ENCODE measurements at regions of chr7 and their contacts with region 1.

Region 1: GRCh38 chr7:80918909-80919662 is at the start of gene SEMA3C:
- DNase-seq: peak; percentile 90
- ATAC-seq: peak; percentile 87
- H3K4me3 ChIP-seq: peak within 1 kb of the TSS; percentile 95 to 99
- H3K27ac ChIP-seq: peak within 1 kb of the TSS; percentile 100
- H3K4me1 ChIP-seq: peaks cover 59% of the 10 kb centered on the region
- H3K27me3 ChIP-seq: no peaks in the 10 kb centered on the region
- CTCF ChIP-seq: peak; percentile 22; the same call in 1 of the 2 replicates
- total RNA-seq, gene SEMA3C: 232 TPM

Region 2: DNA sequence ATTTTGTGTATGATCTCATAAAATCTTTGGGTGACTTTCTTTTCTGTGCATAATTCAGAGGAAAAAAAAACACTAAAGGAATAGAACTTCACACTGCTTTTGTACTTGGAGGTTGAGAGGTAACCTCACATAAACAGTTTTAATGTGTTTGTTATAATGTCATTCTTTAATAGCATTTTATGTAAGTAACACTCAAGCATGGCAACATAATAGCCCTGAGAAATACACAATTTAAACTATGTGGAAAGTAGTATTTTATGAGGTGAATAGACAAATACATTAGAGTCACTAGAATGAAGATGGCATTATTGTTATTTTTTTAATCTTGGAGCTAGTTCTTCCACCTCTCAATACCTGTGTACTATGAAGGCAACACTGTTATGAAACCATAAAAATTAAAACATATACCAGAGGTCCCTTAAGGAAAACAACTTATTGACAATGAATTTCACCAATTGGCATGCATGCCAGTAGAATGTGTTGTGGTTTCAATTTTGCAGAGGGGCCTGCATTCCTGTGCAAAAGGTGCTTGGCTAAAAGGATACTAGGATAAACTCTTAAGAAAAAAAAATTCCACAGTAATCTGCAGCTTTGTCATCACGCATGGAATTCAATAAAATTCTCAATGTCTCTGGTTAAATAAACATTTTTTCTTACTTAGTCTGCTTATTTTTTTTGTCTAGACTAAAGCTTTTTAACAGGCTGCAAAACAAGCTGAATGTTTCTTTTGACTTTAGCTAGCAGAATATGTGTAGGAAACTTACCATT is 178.1 kb before region 1 on chr7:
- CTCF ChIA-PET with region 1: interaction called, 12 read pairs
- POLR2A ChIA-PET with region 1: no interaction called
- in situ Hi-C with region 1: no loop called
- intact Hi-C with region 1: no loop called
- DNase-seq: no peak
- ATAC-seq: peak; percentile 69
- H3K4me3 ChIP-seq: no peak overlapping the region
- H3K27ac ChIP-seq: peak overlapping the region; percentile 80
- H3K4me1 ChIP-seq: peaks cover 29% of the 10 kb centered on the region; the same call in 1 of the 2 replicates
- H3K27me3 ChIP-seq: no peaks in the 10 kb centered on the region
- CTCF ChIP-seq: no peak

Region 3: GRCh38 chr7:81173766-81174281 is 254.7 kb after region 1 on chr7:
- CTCF ChIA-PET with region 1: no interaction called
- POLR2A ChIA-PET with region 1: no interaction called
- in situ Hi-C with region 1: no loop called
- intact Hi-C with region 1: loop called (anchors 5 kb)
- DNase-seq: peak; percentile 38
- ATAC-seq: peak; percentile 98
- H3K4me3 ChIP-seq: peak overlapping the region in 1 of 2 experiments; percentile 45; a peak in 2 of 4 replicates
- H3K27ac ChIP-seq: peak overlapping the region; percentile 98
- H3K4me1 ChIP-seq: peaks cover 22% of the 10 kb centered on the region
- H3K27me3 ChIP-seq: no peaks in the 10 kb centered on the region
- CTCF ChIP-seq: no peak

Region 4: DNA sequence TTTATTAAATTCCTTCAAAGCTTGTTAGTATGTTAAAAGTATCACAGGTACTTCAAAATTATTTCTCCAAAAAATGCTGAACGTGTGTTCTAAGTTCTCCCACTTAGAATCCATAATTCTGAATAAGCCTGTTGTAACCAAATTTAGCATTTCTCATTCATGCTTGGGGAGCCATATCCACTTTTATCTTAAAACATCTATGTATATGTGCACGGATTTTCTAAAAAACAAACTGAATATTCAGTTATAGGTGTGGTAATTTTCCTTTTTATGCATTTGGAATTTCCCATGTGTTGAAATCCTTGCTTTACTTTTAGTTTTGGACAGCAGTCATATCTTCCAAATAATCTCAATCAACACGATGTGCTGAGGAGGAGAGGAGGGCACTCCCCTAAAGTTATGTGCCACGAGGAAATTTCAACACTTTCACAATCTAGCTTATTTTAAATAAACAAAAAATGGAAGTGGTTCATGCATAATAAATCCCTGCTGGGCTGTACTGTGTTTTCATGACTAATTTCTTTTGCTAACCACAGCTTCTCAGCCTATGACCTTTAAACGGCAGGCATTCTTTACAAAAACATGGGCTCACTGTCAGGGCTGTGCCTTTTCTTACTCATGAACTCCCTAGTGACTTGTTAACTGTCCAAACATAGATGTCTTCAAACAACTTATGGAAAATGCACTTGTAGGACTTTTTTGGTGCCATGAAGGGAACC is 380.0 kb after region 1 on chr7:
- CTCF ChIA-PET with region 1: no interaction called
- POLR2A ChIA-PET with region 1: interaction called, 3 read pairs
- in situ Hi-C with region 1: no loop called
- intact Hi-C with region 1: loop called (anchors 10 kb)
- DNase-seq: peak; percentile 88
- ATAC-seq: peak; percentile 99
- H3K4me3 ChIP-seq: peak overlapping the region in 1 of 2 experiments; percentile 1; a peak in 1 of 4 replicates
- H3K27ac ChIP-seq: peak overlapping the region; percentile 98
- H3K4me1 ChIP-seq: peaks cover 32% of the 10 kb centered on the region
- H3K27me3 ChIP-seq: no peaks in the 10 kb centered on the region
- CTCF ChIP-seq: no peak

Region 5: DNA sequence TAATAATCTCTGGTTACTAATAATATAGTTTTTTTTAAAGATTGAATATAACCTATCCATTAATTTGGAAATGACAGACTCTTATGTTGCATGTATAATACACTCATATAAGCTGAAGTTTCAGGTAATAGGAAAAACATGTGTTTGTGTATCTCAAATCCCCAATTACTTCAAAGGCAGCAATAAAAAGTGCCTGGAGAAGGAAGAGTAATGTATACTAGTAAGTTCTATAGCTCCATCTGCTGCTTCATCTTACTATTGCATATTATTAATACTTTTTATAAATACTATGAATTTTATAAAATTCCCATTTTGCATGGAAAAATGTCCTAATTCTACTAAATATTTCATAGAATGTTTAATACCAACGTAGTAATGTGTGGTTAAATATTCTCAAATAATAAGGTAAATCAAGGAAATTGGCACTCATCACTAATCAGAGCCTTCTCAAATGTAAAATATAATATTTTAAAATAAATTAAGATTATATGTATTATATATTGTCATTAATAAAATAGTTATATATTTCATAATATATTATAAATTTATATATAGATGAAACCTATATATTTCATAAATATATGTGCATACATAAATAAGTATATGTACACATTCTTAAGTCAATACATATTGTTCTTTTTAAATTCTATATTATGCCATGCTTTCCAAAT is 538.9 kb after region 1 on chr7:
- CTCF ChIA-PET with region 1: interaction called, 3 read pairs
- POLR2A ChIA-PET with region 1: interaction called, 6 read pairs
- in situ Hi-C with region 1: no loop called
- intact Hi-C with region 1: loop called (anchors 5 kb)
- DNase-seq: no peak
- ATAC-seq: no peak
- H3K4me3 ChIP-seq: no peak overlapping the region
- H3K27ac ChIP-seq: peak overlapping the region; percentile 81; the same call in 1 of the 2 replicates
- H3K4me1 ChIP-seq: no peaks in the 10 kb centered on the region; the same call in 1 of the 2 replicates
- H3K27me3 ChIP-seq: no peaks in the 10 kb centered on the region
- CTCF ChIP-seq: peak; percentile 48; the same call in 1 of the 2 replicates

Measured in Panc1 (cell line).